Sigmoid colon (tissue), 7 donors: ENCODE measurements at regions of chr5 and their contacts with region 1.

Region 1: GRCh38 chr5:173331956-173332479 is 3.8 kb upstream of the STC2 start:
- DNase-seq: peak; percentile 92
- H3K4me3 ChIP-seq: no peak overlapping the region
- H3K27ac ChIP-seq: no peak overlapping the region
- H3K4me1 ChIP-seq: peaks cover 0 to 33% (median 31%) of the 10 kb centered on the region in 4 donors
- H3K27me3 ChIP-seq: peaks cover 6 to 34% (median 18%) of the 10 kb centered on the region in 3 donors
- CTCF ChIP-seq: peak; percentile 96 to 98 (median 97)
- EP300 ChIP-seq: no peak
- POLR2A ChIP-seq: no peak

Region 2: DNA sequence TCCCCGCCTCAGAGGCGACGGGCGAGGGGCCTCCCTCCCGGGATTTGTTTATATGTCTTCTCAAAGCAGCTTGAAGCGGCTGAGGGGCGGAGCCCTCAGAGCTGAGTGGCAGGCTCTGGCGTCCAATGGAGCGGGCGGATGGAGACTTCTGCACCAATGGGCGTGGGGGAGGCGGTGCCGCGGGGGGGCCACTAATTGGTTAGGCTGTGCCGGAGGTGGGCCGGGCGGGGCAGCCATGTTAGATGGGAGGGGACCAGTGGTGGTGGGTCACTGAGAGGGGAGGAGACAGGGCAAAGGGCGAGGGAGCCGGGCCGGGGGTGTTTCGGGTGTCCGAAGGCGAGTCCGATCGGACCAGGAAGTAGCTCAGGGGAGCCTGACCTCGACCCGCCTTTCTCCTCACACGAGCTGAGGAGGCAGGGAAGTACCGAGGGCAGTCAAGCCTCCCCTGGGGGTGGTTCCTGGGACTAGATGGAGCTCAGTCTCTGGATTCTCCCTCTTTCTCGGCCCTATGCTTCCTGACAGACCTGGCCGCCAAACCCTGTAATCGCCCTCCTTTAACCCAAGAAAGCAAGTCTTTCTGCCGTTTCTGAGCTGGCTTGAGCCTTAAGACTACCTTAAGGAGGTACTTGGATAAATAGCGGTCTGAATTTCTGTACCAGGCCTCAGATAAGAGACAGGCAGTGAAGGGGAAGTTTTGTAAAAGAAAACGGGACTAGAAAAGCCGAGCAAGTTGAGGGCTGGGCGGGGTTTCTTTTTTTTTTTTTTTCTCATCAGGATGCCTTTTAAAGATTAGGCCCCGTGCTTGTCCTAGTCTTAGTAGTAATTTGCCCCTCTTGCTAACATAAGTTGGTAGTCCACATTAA is 274.7 kb before region 1 on chr5:
- intact Hi-C with region 1: loop called (anchors 5 kb)
- DNase-seq: peak; percentile 99
- H3K4me3 ChIP-seq: peak overlapping the region; percentile 77 to 100 (median 100)
- H3K27ac ChIP-seq: peak overlapping the region; percentile 97 to 100 (median 99)
- H3K4me1 ChIP-seq: peaks cover 0 to 59% (median 53%) of the 10 kb centered on the region in 4 donors
- H3K27me3 ChIP-seq: no peaks in the 10 kb centered on the region
- CTCF ChIP-seq: peak in 2 of 4 experiments; percentile 30
- EP300 ChIP-seq: no peak
- POLR2A ChIP-seq: no peak

Region 3: DNA sequence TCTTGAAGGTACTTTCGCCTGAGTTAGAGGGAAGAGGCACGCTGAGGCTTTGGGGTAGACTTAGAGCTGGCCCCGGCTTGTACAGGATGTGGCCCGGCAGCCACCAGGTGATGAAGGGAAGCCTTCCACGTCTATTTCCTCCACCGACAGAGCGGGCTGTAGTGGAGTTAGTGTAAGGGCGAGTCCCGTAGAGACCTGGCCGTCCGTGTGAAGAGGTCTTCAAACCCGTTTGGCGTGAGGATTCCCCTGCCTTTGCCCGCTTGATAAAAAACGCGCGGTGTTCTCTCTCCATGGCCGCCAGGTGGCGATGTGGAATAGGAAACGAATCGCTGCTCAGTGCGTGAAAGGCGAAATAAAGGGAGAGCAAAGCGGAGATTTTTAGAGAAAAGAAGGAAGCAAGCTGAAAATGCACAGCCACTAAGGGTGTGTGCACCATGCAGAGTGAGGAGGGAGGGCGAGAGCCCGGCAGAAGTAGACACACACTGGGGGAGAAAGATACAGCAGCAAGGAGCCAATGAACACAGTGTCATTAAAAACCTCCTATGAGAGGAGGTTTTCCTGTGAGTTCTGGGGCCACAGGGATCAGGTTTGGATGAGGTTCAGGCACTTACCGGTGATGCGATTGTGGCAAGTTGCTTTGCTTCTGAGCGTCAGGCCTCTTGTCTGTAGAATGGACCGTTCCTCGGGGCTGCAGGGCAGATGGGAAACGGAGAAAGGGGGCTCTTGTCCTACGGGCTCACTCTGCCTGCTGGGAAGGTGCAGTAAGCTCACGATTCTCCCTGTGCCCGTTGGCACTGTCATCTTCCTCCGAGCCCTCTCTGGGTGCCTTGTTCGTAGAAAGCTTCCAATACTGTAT is 38.0 kb before region 1 on chr5:
- intact Hi-C with region 1: loop called (anchors 1 kb)
- DNase-seq: peak; percentile 81
- H3K4me3 ChIP-seq: peak overlapping the region in 1 of 4 donors; percentile 21
- H3K27ac ChIP-seq: no peak overlapping the region
- H3K4me1 ChIP-seq: peaks cover 0 to 25% (median 24%) of the 10 kb centered on the region in 4 donors
- H3K27me3 ChIP-seq: no peaks in the 10 kb centered on the region
- CTCF ChIP-seq: peak; percentile 86 to 95 (median 92)
- EP300 ChIP-seq: no peak
- POLR2A ChIP-seq: no peak

Region 4: DNA sequence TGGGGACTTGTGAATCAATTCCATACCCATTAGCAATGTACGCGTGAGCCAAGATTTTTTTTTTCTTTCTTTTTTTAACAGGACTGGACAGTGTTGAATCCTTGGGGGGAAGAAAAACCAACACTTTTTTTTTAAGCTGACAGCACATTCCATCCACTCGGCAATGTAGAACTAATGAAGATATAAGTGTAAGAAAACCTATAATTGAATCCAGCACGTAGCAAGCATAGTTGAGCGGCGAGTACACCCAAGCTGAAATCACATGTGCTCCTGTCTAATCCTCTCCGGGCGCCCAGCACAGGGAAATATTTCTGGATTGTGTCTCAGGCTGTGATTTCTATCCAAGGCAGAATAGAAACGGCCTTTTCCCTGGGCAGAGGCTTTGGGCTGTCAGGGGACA is 166.3 kb after region 1 on chr5:
- intact Hi-C with region 1: loop called (anchors 5 kb)
- DNase-seq: no peak
- H3K4me3 ChIP-seq: peak overlapping the region in 1 of 4 donors; percentile 6
- H3K27ac ChIP-seq: peak overlapping the region; percentile 55 to 87 (median 80)
- H3K4me1 ChIP-seq: peaks cover 0 to 58% (median 52%) of the 10 kb centered on the region in 4 donors
- H3K27me3 ChIP-seq: no peaks in the 10 kb centered on the region
- CTCF ChIP-seq: no peak
- EP300 ChIP-seq: peak in 1 of 4 donors; percentile 28
- POLR2A ChIP-seq: no peak

Region 5: GRCh38 chr5:173573126-173573960 is 241.3 kb after region 1 on chr5:
- intact Hi-C with region 1: loop called (anchors 10 kb)
- DNase-seq: peak; percentile 84
- H3K4me3 ChIP-seq: no peak overlapping the region
- H3K27ac ChIP-seq: peak overlapping the region in 1 of 4 donors; percentile 20
- H3K4me1 ChIP-seq: peaks cover 0 to 20% (median 10%) of the 10 kb centered on the region in 4 donors
- H3K27me3 ChIP-seq: no peaks in the 10 kb centered on the region
- CTCF ChIP-seq: peak; percentile 86 to 98 (median 90)
- EP300 ChIP-seq: no peak
- POLR2A ChIP-seq: no peak